ENCODE measurements at regions of chr14 and their contacts with region 1.

Region 1: GRCh38 chr14:33848706-33849454 is 102.0 kb downstream of the EGLN3 start:
- DNase-seq: peak; percentile 32 to 68
- ATAC-seq: peak; percentile 86 to 91 (median 88)
- H3K4me3 ChIP-seq: no peak overlapping the region
- H3K27ac ChIP-seq: no peak overlapping the region
- H3K4me1 ChIP-seq: no peaks in the 10 kb centered on the region
- H3K27me3 ChIP-seq: no peaks in the 10 kb centered on the region
- CTCF ChIP-seq: peak; percentile 70

Region 2: DNA sequence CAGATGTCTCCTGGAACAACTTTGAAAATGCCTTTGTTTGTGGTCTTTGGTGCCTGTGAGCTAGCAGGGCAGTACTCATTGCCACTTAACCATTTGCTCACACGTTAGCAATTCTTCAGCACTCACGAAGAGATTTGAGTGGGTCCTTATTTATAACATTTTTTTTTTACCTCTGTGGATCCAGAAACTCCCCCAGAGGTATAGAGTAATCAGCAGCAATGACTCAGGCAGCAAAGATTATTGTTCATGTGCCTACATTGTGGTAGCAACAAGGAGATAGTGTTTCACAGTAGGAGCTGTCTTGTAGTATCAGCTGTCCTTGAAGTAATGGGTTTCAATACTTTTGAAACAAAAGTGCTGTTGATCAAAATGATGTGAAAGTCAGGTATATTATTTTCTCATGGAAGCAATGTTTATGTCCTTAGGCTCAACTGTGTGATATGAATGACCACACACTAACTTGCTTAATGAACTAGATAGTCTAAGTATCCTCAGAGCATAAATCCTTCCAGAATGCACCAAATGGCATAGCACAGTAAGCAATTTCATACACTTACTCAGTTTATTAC is 202.1 kb before region 1 on chr14:
- intact Hi-C with region 1: no loop called
- DNase-seq: no peak
- ATAC-seq: no peak
- H3K4me3 ChIP-seq: no peak overlapping the region
- H3K27ac ChIP-seq: no peak overlapping the region
- H3K4me1 ChIP-seq: no peaks in the 10 kb centered on the region
- H3K27me3 ChIP-seq: no peaks in the 10 kb centered on the region
- CTCF ChIP-seq: no peak

Region 3: DNA sequence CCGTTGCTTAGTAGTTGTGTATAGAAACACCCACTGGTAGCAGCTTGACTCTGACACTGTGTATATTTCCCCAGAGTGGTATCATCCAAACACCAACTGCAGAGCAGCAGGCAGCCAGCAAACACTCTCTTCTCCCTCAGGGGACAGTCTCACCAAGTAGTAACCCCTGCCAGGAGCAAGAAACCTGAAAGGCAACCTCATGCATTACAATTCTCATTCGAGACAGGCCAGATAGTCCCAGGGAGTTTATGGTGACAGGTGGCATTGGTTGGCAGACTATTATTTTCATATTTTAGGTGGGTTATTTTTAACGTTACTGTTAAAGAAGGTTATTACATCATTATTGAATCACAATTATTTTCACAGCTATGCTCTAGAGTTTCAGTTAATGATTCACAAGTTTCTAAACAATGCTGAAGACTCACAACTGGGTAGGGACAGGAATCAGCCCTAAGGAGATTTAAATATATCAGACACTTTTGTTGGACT is 120.8 kb before region 1 on chr14:
- intact Hi-C with region 1: no loop called
- DNase-seq: no peak
- ATAC-seq: peak in 3 of 4 donors; percentile 38 to 49 (median 48)
- H3K4me3 ChIP-seq: no peak overlapping the region
- H3K27ac ChIP-seq: no peak overlapping the region
- H3K4me1 ChIP-seq: peaks cover 3% of the 10 kb centered on the region
- H3K27me3 ChIP-seq: no peaks in the 10 kb centered on the region
- CTCF ChIP-seq: no peak

Region 4: DNA sequence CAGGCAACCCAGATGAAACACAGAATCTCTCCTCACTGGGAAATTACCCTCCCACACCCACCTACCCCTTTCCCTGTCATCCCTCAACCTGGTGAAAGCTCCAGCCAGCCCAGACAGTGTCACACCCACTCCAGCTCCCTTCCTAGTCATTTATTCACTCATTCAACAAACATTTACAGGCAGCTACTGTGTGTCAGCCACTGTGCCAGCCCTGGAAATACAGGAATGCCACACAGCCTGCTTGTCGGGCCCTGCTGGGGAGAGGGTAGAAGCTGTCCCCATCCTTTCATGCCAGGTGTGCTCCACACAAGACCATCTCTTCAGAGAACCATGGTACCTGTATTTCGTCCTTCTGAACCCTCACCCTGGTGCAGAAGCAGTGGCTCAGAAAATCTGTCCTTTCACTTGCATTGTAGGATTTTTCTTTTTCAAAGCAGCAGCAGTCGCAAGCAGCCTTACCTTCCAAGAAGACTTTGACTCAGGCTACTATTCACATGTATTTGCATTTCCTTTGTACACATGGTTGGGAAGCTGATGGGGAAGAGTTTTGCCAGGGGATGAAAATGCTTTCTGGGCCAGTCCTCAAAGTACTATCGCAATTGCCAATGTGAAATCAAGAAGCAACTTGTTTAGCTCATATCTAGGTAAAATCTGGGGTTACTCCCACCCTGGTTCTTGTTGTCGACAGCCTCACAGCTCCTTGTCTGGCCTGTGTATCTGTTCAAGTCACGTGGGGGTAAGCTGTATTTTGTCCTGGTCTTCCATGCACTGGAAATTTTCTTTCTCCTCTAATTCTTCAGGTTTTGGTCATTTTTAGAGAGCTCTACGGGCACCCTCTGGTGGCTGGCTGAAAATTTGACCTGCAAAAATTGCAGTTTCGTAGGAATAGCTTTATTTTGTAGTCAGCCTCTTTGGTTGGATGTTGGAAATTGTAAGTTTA is 249.4 kb after region 1 on chr14:
- intact Hi-C with region 1: loop called (anchors 2 to 10 kb)
- DNase-seq: peak; percentile 17 to 62
- ATAC-seq: peak in 3 of 4 donors; percentile 25 to 65 (median 56)
- H3K4me3 ChIP-seq: no peak overlapping the region
- H3K27ac ChIP-seq: no peak overlapping the region
- H3K4me1 ChIP-seq: no peaks in the 10 kb centered on the region
- H3K27me3 ChIP-seq: no peaks in the 10 kb centered on the region
- CTCF ChIP-seq: peak; percentile 56

Measured in psoas muscle (tissue), 8 donors.